H1 (cell line): ENCODE measurements at regions of chr10 and their contacts with region 1.

Region 1: GRCh38 chr10:89369156-89370105 is 8.4 kb upstream of the IFIT1B start:
- DNase-seq: no peak
- H3K4me3 ChIP-seq: no peak overlapping the region
- H3K27ac ChIP-seq: no peak overlapping the region
- H3K4me1 ChIP-seq: peaks cover 0 to 6% (median 0%) of the 10 kb centered on the region in 4 experiments; a peak in 1 of 7 replicates
- H3K27me3 ChIP-seq: no peaks in the 10 kb centered on the region
- CTCF ChIP-seq: peak in 2 of 3 experiments; percentile 29 to 49; a peak in 2 of 4 replicates
- EP300 ChIP-seq: no peak
- POLR2A ChIP-seq: no peak
- RAD21 ChIP-seq: peak; percentile 50 to 51

Region 2: DNA sequence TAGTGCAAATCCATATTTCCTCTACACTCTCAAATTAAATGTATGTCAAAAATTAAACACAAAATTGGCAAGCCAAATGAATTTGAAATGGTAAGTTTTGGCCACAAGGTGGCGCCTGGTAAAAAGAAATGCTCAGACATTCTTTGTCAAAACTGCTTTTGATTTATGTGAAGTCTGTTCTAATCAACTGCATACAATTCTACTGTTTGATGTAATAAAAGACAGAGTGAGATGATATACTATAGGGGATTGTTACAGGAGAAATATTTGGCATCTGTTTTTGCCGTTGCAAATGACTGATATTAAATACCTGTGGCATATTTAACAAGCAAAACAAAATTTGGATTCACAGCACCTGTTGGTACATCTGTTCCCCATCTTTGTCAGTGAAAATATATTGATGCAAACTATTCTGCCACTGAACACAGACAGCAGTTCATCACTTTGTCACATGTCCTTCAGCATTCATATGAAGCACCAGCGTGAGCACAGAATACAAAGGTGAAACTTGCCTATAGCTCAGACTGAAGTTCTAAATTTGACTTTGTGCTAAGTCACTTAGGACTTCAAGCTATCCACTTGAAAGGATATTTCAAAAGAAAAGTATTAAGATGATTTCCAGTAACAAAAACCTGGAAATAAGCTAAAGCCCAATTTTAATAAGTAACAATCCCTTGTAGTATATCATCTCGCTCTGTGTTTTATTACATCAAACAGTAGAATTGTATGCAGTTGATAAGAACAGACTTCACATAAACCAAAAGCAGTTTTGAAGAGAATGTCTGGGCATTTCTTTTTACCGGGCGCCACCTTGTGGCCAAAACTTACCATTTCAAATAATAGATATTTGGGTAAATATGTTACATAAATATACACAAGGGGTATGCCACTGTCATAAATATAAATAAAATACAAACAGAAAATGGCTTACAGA is 152.1 kb before region 1 on chr10:
- CTCF ChIA-PET with region 1: interaction called, 25 read pairs
- POLR2A ChIA-PET with region 1: no interaction called
- DNase-seq: peak in 1 of 2 experiments; percentile 60
- H3K4me3 ChIP-seq: no peak overlapping the region
- H3K27ac ChIP-seq: no peak overlapping the region
- H3K4me1 ChIP-seq: peaks cover 0 to 6% (median 0%) of the 10 kb centered on the region in 4 experiments; a peak in 2 of 7 replicates
- H3K27me3 ChIP-seq: no peaks in the 10 kb centered on the region
- CTCF ChIP-seq: peak in 2 of 3 experiments; percentile 56; a peak in 2 of 4 replicates
- EP300 ChIP-seq: no peak
- POLR2A ChIP-seq: no peak
- RAD21 ChIP-seq: peak; percentile 65 to 69

Region 3: GRCh38 chr10:89278034-89278535 is 91.3 kb before region 1 on chr10:
- CTCF ChIA-PET with region 1: interaction called, 35 read pairs
- POLR2A ChIA-PET with region 1: no interaction called
- DNase-seq: no peak
- H3K4me3 ChIP-seq: no peak overlapping the region
- H3K27ac ChIP-seq: no peak overlapping the region
- H3K4me1 ChIP-seq: no peaks in the 10 kb centered on the region
- H3K27me3 ChIP-seq: no peaks in the 10 kb centered on the region
- CTCF ChIP-seq: no peak
- EP300 ChIP-seq: no peak
- POLR2A ChIP-seq: no peak
- RAD21 ChIP-seq: no peak

Region 4: GRCh38 chr10:89310056-89310893 is 59.2 kb before region 1 on chr10:
- CTCF ChIA-PET with region 1: interaction called, 60 read pairs
- POLR2A ChIA-PET with region 1: no interaction called
- DNase-seq: no peak
- H3K4me3 ChIP-seq: no peak overlapping the region
- H3K27ac ChIP-seq: no peak overlapping the region
- H3K4me1 ChIP-seq: no peaks in the 10 kb centered on the region; a peak in 1 of 7 replicates
- H3K27me3 ChIP-seq: no peaks in the 10 kb centered on the region
- CTCF ChIP-seq: no peak
- EP300 ChIP-seq: no peak
- POLR2A ChIP-seq: no peak
- RAD21 ChIP-seq: no peak

Region 5: DNA sequence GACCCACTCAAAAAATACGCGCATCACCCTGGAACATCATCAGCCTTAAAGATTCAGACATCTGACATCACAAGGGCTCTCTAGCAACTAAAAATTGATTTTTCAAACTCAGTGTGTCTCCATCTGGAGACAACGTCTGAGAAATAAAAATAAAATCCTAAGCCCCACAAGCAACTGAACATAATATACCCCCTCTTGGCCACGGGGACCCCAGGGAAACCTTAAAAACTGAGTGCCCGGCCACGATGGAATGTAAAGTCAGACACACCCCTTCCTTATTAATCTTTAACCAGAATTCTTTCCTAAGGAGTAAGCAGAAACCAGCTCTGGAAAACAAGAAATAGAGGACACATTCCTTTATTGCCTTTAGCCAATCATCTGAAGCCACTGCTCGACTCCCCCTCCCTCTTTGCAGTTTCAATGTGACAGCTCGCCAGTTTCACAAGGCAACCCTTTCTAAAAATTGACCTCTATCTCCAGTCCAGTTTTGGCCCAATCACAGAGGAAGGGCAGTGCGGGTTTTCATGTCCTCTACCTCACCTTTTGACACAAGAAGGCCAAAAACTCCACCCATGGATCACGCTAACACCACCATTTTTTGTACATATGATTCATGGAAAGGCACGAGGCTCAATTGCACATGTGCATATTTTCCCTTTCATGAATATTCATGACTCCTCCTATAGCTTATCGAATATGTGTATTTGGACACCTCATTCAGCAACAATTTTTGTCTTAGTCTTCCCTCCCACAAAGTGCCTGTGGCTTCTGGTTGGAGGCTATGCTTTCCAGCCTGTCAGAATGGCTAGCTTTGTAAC is 17.4 kb before region 1 on chr10:
- CTCF ChIA-PET with region 1: interaction called, 64 read pairs
- POLR2A ChIA-PET with region 1: no interaction called
- DNase-seq: no peak
- H3K4me3 ChIP-seq: no peak overlapping the region
- H3K27ac ChIP-seq: no peak overlapping the region
- H3K4me1 ChIP-seq: peaks cover 4 to 18% (median 15%) of the 10 kb centered on the region in 4 experiments; a peak in 6 of 7 replicates
- H3K27me3 ChIP-seq: no peaks in the 10 kb centered on the region
- CTCF ChIP-seq: no peak
- EP300 ChIP-seq: no peak
- POLR2A ChIP-seq: no peak
- RAD21 ChIP-seq: no peak

Region 6: GRCh38 chr10:89414146-89414878 is 44.9 kb after region 1 on chr10 and contains the start of gene IFIT5:
- CTCF ChIA-PET with region 1: interaction called, 10 read pairs
- POLR2A ChIA-PET with region 1: no interaction called
- DNase-seq: no peak
- H3K4me3 ChIP-seq: peak within 1 kb of the TSS; percentile 78 to 82 (median 80)
- H3K27ac ChIP-seq: no peak within 1 kb of the TSS
- H3K4me1 ChIP-seq: peaks cover 0 to 10% (median 3%) of the 10 kb centered on the region in 4 experiments; a peak in 6 of 7 replicates
- H3K27me3 ChIP-seq: peaks cover 0 to 20% (median 15%) of the 10 kb centered on the region in 4 experiments; a peak in 6 of 7 replicates
- CTCF ChIP-seq: peak in 1 of 3 experiments; percentile 6; a peak in 1 of 4 replicates
- EP300 ChIP-seq: no peak
- POLR2A ChIP-seq: peak; percentile 46 to 66
- RAD21 ChIP-seq: 0 out of 4 replicates have a peak, but pooled peaks of 1 of the 2 experiments have one; percentile 0
- total RNA-seq, gene IFIT5: 2.6 TPM in 2 replicates